ENCODE measurements at regions of chr19 and their contacts with region 1.

Region 1: GRCh38 chr19:58362272-58362994 is at the start of gene ZNF497:
- DNase-seq: peak; percentile 98
- H3K4me3 ChIP-seq: peak within 1 kb of the TSS; percentile 95
- H3K27ac ChIP-seq: peak within 1 kb of the TSS; percentile 96
- H3K4me1 ChIP-seq: peaks cover 6% of the 10 kb centered on the region
- H3K27me3 ChIP-seq: no peaks in the 10 kb centered on the region
- CTCF ChIP-seq: no peak
- total RNA-seq, gene ZNF497: 2.6 and 3.4 TPM in 2 replicates

Region 2: DNA sequence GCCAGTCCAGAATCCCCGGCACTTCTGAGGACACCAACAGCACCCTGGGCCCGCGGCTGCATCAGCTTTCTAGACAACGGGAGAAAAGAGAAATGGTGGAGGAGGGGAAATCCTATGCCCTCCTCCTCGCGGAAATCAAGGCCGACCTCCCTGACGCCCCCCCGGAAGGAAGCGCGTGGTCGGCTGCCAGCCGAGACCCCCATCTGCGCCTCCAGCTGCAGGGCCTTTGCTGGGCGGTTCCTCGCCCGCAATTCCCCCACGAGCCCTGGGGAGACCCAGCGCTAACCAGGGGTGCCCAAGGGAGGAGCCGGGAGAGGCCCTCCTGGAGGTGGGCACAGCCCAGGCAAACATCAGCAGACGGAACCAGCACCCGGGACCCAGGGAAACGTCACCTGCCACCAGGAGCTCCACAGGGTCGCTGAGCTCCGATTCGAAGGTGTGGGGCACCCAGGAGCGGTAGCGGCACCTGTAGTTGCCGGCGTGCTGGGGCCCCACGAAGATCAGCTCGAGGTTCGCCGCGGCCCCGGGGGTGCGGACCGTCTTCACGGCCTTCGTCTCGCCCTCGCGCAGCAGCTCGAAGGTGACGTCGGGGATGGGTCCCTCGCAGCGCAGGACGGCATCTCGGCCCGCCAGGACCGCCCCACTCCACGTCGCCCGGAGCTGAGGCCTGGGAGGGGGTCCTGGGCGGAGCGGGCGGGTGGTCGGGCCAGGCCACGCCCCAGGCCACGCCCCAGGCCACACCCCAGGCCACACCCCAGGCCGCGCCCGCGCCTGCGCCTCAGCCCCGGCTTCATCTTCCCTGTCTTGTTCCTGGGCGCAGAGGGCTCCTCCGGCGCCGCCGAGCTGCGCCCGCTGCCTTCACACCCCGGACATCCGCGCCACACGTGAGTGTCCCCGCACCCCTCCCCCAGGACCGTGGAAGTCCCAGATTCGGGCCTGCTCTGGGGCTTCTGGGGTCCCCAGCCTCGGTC is 15.2 kb before region 1 on chr19:
- CTCF ChIA-PET with region 1: interaction called, 3 read pairs
- POLR2A ChIA-PET with region 1: interaction called, 10 read pairs
- intact Hi-C with region 1: no loop called
- DNase-seq: peak; percentile 84
- H3K4me3 ChIP-seq: peak overlapping the region; percentile 89
- H3K27ac ChIP-seq: peak overlapping the region; percentile 90
- H3K4me1 ChIP-seq: peaks cover 8% of the 10 kb centered on the region
- H3K27me3 ChIP-seq: no peaks in the 10 kb centered on the region
- CTCF ChIP-seq: no peak

Region 3: GRCh38 chr19:58408152-58409009 is 45.9 kb after region 1 on chr19 and contains the start of gene ZNF584:
- CTCF ChIA-PET with region 1: no interaction called
- POLR2A ChIA-PET with region 1: interaction called, 15 read pairs
- intact Hi-C with region 1: no loop called
- DNase-seq: peak; percentile 98
- H3K4me3 ChIP-seq: peak within 1 kb of the TSS; percentile 94
- H3K27ac ChIP-seq: peak within 1 kb of the TSS; percentile 91
- H3K4me1 ChIP-seq: peaks cover 4% of the 10 kb centered on the region
- H3K27me3 ChIP-seq: no peaks in the 10 kb centered on the region
- CTCF ChIP-seq: no peak; the same call in 1 of the 2 replicates
- total RNA-seq, gene ZNF584: 20.9 and 21.6 TPM in 2 replicates

Region 4: GRCh38 chr19:58562195-58563033 is 200.0 kb after region 1 on chr19:
- CTCF ChIA-PET with region 1: no interaction called
- POLR2A ChIA-PET with region 1: no interaction called
- intact Hi-C with region 1: no loop called
- DNase-seq: peak; percentile 51
- H3K4me3 ChIP-seq: peak overlapping the region; percentile 43
- H3K27ac ChIP-seq: no peak overlapping the region
- H3K4me1 ChIP-seq: peaks cover 16% of the 10 kb centered on the region
- H3K27me3 ChIP-seq: no peaks in the 10 kb centered on the region
- CTCF ChIP-seq: no peak

Region 5: DNA sequence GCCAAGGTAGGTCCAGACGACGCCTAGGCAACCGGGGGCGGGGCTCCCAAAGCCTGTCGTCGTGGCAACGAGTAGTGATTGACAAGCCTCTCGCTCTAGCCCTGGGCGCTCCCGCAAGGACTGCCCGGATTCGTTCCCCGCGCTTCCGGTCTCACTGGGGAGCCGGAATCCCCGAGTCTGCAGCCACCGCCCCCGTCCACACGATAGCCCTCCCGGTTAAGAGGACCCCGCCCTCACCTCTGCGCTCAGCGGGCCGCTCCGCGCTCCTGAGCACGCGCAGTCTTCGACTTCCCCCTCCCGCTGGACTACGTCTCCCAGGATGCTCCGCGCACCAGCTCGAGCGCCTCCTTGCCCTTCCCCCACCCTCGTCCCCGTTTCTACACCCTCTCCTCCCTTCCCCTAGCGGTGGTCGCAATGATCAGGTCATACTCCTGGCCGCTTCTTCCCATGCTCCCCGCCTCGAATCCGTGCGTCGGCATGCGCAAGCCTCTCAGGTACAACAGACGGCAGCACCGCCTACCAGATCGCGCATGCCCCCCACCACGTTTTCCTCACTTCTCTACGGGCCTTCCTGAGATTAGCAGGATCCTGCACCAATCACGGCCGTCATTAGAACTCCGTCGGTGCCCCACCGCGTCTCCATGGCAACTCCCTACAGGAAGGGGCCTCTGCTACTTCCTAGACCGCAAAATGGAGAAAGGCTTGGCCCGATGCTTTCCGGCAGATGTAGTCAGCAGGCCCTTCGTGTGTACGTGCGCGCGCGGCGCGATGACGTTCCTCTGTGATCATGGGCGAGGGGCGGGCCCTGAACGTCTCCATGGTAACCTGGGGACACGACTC is 210.6 kb after region 1 on chr19 and contains the start of gene MZF1:
- CTCF ChIA-PET with region 1: no interaction called
- POLR2A ChIA-PET with region 1: no interaction called
- intact Hi-C with region 1: no loop called
- DNase-seq: peak; percentile 100
- H3K4me3 ChIP-seq: peak within 1 kb of the TSS; percentile 52
- H3K27ac ChIP-seq: peak within 1 kb of the TSS; percentile 96
- H3K4me1 ChIP-seq: peaks cover 10% of the 10 kb centered on the region
- H3K27me3 ChIP-seq: no peaks in the 10 kb centered on the region
- CTCF ChIP-seq: peak; percentile 26; the same call in 1 of the 2 replicates
- total RNA-seq, gene MZF1: 18.2 and 20.3 TPM in 2 replicates